Activated B cell treated with CpG ODN at 0.5 μM for 24 hours (primary cell): ENCODE measurements at regions of chr12 and their contacts with region 1.

Region 1: DNA sequence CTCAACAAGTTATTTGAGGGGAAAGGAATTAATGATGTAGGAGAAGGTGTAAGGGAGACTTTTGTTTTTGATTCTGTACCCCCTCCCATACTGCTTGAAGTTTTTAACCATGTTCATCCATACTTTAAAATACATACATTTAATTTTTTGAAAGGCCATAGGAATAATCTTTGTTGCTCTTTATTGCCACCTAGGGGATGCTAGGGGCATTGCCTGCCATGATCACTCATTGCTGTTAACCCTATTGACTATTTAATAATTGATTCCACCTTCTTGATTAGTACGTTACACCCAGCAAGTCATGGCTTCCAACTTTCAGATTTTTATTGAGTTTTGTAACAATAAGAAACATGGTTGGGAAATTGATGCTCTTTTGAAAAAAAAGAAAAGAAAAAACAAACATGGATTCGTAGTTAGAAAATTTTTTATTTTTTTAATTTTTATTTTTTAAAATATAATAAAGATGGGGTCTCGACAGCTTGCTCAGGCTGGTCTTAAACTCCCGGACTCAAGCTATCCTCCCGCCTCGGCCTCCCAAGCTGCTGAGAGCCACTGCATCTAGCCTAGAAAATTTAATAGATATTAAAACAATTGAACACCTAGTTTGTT is 8.5 kb upstream of the PRKAB1 start:
- DNase-seq: no peak
- ATAC-seq: peak; percentile 75
- H3K4me3 Mint-ChIP-seq: no peak overlapping the region
- H3K27ac Mint-ChIP-seq: no peak overlapping the region
- H3K4me1 Mint-ChIP-seq: peaks cover 2% of the 10 kb centered on the region
- H3K27me3 Mint-ChIP-seq: no peaks in the 10 kb centered on the region
- CTCF ChIP-seq: peak; percentile 77

Region 2: DNA sequence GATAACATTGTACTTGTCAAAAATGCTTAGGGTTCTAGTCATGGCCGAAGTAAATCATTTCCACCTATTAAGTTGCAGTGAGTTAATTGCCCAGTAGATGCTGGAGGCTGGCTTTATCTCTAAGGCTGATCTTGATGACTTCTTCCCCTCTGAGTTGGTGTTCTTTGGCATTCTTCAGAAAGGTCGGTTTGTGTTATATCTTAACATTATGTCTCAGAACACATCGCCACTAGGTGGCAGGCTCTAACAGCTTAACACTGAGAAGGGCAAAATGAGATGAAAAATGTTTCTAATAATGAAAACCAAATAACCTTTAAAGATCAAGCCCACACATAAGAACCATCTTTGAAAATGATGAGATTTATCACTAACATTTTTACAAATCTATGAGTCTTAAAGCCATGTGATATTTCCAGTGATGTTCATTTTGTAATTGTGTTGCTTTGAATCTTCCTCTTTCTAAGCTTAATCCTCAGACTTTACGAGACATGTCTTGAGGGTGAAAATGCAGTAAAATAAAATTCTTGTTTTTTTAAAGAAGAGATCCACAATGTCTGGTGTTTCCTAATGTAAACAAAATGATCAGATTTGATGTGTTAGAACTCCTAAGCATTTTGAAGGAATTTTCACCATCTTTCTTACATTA is 1254.4 kb before region 1 on chr12:
- CTCF ChIA-PET with region 1: no interaction called
- POLR2A ChIA-PET with region 1: no interaction called
- intact Hi-C with region 1: loop called (anchors 2 kb)
- DNase-seq: no peak
- ATAC-seq: no peak
- H3K4me3 Mint-ChIP-seq: no peak overlapping the region
- H3K27ac Mint-ChIP-seq: no peak overlapping the region
- H3K4me1 Mint-ChIP-seq: no peaks in the 10 kb centered on the region
- H3K27me3 Mint-ChIP-seq: no peaks in the 10 kb centered on the region
- CTCF ChIP-seq: peak; percentile 62

Region 3: GRCh38 chr12:119113496-119113986 is 545.9 kb before region 1 on chr12:
- CTCF ChIA-PET with region 1: no interaction called
- POLR2A ChIA-PET with region 1: no interaction called
- intact Hi-C with region 1: loop called (anchors 5 kb)
- DNase-seq: no peak
- ATAC-seq: no peak
- H3K4me3 Mint-ChIP-seq: no peak overlapping the region
- H3K27ac Mint-ChIP-seq: no peak overlapping the region
- H3K4me1 Mint-ChIP-seq: no peaks in the 10 kb centered on the region
- H3K27me3 Mint-ChIP-seq: peaks cover 2% of the 10 kb centered on the region
- CTCF ChIP-seq: no peak

Region 4: GRCh38 chr12:119423285-119423684 is 236.1 kb before region 1 on chr12:
- CTCF ChIA-PET with region 1: no interaction called
- POLR2A ChIA-PET with region 1: no interaction called
- intact Hi-C with region 1: no loop called
- DNase-seq: no peak
- ATAC-seq: no peak
- H3K4me3 Mint-ChIP-seq: no peak overlapping the region
- H3K27ac Mint-ChIP-seq: no peak overlapping the region
- H3K4me1 Mint-ChIP-seq: no peaks in the 10 kb centered on the region
- H3K27me3 Mint-ChIP-seq: peaks cover 19% of the 10 kb centered on the region
- CTCF ChIP-seq: no peak

Region 5: DNA sequence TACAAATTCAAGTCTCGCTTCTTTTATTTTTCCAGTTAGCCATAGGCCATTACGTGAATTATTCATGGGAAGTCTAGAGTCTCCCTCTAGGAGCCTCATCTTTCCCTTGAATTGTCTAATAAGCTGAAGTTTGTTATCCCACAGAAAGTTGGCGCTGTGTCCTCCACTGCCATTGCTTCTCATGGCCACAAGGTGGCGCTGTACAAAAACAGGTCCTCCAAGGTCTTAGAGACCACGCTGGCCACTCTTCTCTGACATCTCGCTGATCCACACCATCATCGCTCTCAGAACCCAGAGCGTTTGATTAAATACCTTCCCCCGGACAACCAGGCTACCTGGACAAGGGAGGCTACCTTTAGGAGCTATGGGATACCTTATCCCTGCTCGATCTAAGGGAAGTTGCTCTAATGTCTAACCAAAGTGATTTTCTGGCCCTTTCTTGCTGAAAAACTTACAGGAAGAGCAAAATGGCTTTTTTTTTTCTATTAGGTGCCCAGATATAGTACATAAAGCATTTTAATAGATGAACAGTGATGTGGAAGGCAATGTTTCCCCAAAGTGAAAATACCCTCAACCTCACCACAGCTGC is 214.8 kb before region 1 on chr12:
- CTCF ChIA-PET with region 1: no interaction called
- POLR2A ChIA-PET with region 1: no interaction called
- intact Hi-C with region 1: loop called (anchors 2 kb)
- DNase-seq: no peak
- ATAC-seq: no peak
- H3K4me3 Mint-ChIP-seq: no peak overlapping the region
- H3K27ac Mint-ChIP-seq: no peak overlapping the region
- H3K4me1 Mint-ChIP-seq: no peaks in the 10 kb centered on the region
- H3K27me3 Mint-ChIP-seq: peaks cover 9% of the 10 kb centered on the region
- CTCF ChIP-seq: no peak

Region 6: GRCh38 chr12:119902084-119902509 is 242.7 kb after region 1 on chr12:
- CTCF ChIA-PET with region 1: interaction called, 5 read pairs
- POLR2A ChIA-PET with region 1: no interaction called
- intact Hi-C with region 1: loop called (anchors 2 kb)
- DNase-seq: peak; percentile 27
- ATAC-seq: peak; percentile 82
- H3K4me3 Mint-ChIP-seq: no peak overlapping the region
- H3K27ac Mint-ChIP-seq: no peak overlapping the region
- H3K4me1 Mint-ChIP-seq: peaks cover 4% of the 10 kb centered on the region
- H3K27me3 Mint-ChIP-seq: no peaks in the 10 kb centered on the region
- CTCF ChIP-seq: no peak

Region 7: GRCh38 chr12:119938049-119938667 is 278.8 kb after region 1 on chr12:
- CTCF ChIA-PET with region 1: interaction called, 4 read pairs
- POLR2A ChIA-PET with region 1: no interaction called
- intact Hi-C with region 1: loop called (anchors 1 kb)
- DNase-seq: peak; percentile 19
- ATAC-seq: peak; percentile 62
- H3K4me3 Mint-ChIP-seq: no peak overlapping the region
- H3K27ac Mint-ChIP-seq: no peak overlapping the region
- H3K4me1 Mint-ChIP-seq: no peaks in the 10 kb centered on the region
- H3K27me3 Mint-ChIP-seq: peaks cover 10% of the 10 kb centered on the region
- CTCF ChIP-seq: peak; percentile 93